ENCODE measurements at regions of chr5 and their contacts with region 1.

Region 1: DNA sequence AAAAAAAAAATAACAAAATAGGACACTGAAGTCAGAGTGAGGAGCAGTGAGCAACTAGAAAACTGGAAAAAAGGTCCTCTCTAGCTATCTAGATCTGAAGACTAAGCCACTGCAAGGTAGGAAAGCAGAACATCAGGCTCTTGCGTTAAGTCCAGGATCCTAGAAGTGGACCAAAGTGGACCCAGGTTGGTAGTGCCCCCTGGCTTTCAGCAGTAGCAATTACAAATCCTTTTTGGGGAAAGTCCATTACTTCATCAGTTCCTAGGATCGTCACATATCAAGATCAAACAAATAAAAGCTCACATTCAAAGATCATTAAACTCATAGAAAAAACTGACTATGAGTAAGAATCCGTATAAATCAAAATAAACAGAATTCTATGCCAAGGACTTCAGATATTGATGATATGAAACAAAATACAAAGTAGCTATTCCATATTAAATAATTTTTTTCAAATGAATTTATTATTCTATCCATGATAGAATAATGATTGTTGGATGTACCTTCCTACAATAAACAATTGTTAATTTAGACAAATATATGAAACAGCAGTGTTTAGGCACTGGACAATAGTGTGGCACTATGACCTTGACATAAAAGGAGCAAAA is 6.5 kb upstream of the RICTOR start:
- DNase-seq: no peak
- H3K4me3 ChIP-seq: no peak overlapping the region
- H3K27ac ChIP-seq: no peak overlapping the region
- H3K4me1 ChIP-seq: peaks cover 4 to 30% (median 24%) of the 10 kb centered on the region in 4 donors
- H3K27me3 ChIP-seq: no peaks in the 10 kb centered on the region
- CTCF ChIP-seq: peak; percentile 86 to 93 (median 87)
- EP300 ChIP-seq: no peak
- POLR2A ChIP-seq: no peak

Region 2: GRCh38 chr5:38994324-38994927 is 86.3 kb before region 1 on chr5:
- intact Hi-C with region 1: loop called (anchors 2 kb)
- DNase-seq: no peak
- H3K4me3 ChIP-seq: no peak overlapping the region
- H3K27ac ChIP-seq: no peak overlapping the region
- H3K4me1 ChIP-seq: peaks cover 0 to 10% (median 2%) of the 10 kb centered on the region in 4 donors
- H3K27me3 ChIP-seq: no peaks in the 10 kb centered on the region
- CTCF ChIP-seq: peak; percentile 43 to 51 (median 48)
- EP300 ChIP-seq: no peak
- POLR2A ChIP-seq: no peak

Region 3: GRCh38 chr5:39063037-39063436 is 17.7 kb before region 1 on chr5:
- intact Hi-C with region 1: no loop called
- DNase-seq: no peak
- H3K4me3 ChIP-seq: no peak overlapping the region
- H3K27ac ChIP-seq: peak overlapping the region in 3 of 4 donors; percentile 3 to 15 (median 9)
- H3K4me1 ChIP-seq: peaks cover 46 to 67% (median 56%) of the 10 kb centered on the region in 4 donors
- H3K27me3 ChIP-seq: no peaks in the 10 kb centered on the region
- CTCF ChIP-seq: peak in 1 of 3 experiments; percentile 32
- EP300 ChIP-seq: no peak
- POLR2A ChIP-seq: no peak

Region 4: DNA sequence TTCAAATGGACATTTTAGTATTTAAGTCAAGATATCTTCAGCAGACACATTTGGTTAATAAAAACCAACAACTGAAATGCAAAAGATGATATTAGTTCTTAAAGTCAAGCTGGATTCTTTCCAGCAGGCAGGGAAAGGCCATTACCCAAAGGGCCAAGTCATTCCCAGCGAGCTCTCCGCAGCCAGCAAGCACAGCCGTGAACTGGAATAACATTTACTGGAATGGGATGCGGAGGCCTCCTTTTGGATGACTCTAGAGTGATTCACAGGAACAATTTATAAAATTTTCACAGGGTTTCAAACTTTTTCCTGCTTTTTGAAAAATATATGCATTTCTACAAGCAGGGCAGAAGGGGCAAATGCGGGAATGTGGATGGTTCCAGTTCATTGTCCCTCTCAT is 420.7 kb after region 1 on chr5:
- intact Hi-C with region 1: no loop called
- DNase-seq: no peak
- H3K4me3 ChIP-seq: no peak overlapping the region
- H3K27ac ChIP-seq: peak overlapping the region; percentile 55 to 69 (median 60)
- H3K4me1 ChIP-seq: peaks cover 4 to 29% (median 23%) of the 10 kb centered on the region in 4 donors
- H3K27me3 ChIP-seq: no peaks in the 10 kb centered on the region
- CTCF ChIP-seq: no peak
- EP300 ChIP-seq: no peak
- POLR2A ChIP-seq: no peak